ENCODE measurements at regions of chr5 and their contacts with region 1.

Region 1: DNA sequence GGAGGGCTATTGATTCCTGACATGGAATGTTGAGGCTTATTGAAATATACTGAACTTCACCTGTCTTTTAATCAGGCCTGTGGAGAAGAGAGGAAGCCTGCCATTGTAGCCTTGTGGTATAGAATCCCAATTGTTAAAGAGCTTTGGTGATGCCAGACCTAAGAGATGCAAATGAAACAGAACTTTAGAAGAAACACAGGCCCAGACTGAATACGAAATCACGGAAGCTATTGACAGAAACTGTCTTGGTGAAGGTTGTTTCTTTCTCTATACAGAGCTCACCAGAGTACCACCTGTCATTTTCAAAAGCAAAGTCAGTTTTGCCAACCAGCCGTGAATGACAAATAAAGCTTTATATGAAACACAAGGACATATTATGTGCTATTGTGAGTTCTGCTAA is 660.3 kb downstream of the ISL1 start:
- DNase-seq: no peak
- ATAC-seq: no peak
- H3K4me3 ChIP-seq: no peak overlapping the region
- H3K27ac ChIP-seq: no peak overlapping the region
- H3K4me1 ChIP-seq: no peaks in the 10 kb centered on the region
- H3K27me3 ChIP-seq: no peaks in the 10 kb centered on the region
- CTCF ChIP-seq: no peak
- POLR2A ChIP-seq: no peak
- RAD21 ChIP-seq: no peak

Region 2: DNA sequence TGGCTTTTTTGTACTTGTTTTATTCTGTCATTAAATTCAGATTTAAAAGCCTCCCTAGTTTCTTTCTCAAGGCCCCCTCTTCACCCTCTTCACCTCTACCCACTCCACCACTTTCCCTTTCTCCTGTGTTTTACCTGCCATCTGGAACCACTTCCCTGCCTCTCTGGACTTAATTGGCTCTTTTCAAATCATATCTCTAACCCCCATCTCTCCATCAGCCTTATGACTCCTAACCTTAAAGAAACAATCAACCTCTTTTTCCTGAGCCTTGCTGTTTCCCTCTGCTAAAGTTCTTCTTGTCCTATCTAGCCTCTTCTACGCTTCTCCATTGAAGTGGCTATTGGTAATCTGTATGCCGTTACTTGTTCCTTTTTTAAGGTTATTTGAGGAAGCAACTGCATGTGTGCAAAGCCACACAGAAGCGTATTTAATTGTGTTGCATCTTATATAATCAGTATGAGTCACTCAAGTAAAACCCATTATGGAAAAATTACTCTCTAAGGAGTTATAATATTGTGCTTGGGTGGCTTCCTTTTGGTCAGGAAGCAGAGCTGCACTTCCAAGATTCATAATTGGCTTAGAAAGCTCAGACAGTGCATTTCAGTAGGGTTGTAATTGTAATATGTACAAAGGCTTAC is 90.6 kb after region 1 on chr5:
- CTCF ChIA-PET with region 1: no interaction called
- POLR2A ChIA-PET with region 1: no interaction called
- dilution Hi-C with region 1: no loop called
- in situ Hi-C with region 1: loop called (anchors 25 kb)
- intact Hi-C with region 1: no loop called
- DNase-seq: no peak
- ATAC-seq: no peak
- H3K4me3 ChIP-seq: no peak overlapping the region
- H3K27ac ChIP-seq: no peak overlapping the region
- H3K4me1 ChIP-seq: no peaks in the 10 kb centered on the region
- H3K27me3 ChIP-seq: no peaks in the 10 kb centered on the region
- CTCF ChIP-seq: no peak
- POLR2A ChIP-seq: no peak
- RAD21 ChIP-seq: no peak

Region 3: GRCh38 chr5:52342361-52342760 is 298.8 kb after region 1 on chr5:
- CTCF ChIA-PET with region 1: no interaction called
- POLR2A ChIA-PET with region 1: no interaction called
- dilution Hi-C with region 1: no loop called
- in situ Hi-C with region 1: no loop called
- intact Hi-C with region 1: no loop called
- DNase-seq: no peak
- ATAC-seq: no peak
- H3K4me3 ChIP-seq: no peak overlapping the region
- H3K27ac ChIP-seq: no peak overlapping the region
- H3K4me1 ChIP-seq: no peaks in the 10 kb centered on the region
- H3K27me3 ChIP-seq: no peaks in the 10 kb centered on the region
- CTCF ChIP-seq: no peak
- POLR2A ChIP-seq: no peak
- RAD21 ChIP-seq: no peak